ENCODE measurements at regions of chr15 and their contacts with region 1.

Region 1: GRCh38 chr15:31265871-31266711 is 60.5 kb upstream of the KLF13 start:
- DNase-seq: peak; percentile 58 to 90 (median 76)
- ATAC-seq: peak; percentile 86
- H3K4me3 ChIP-seq: no peak overlapping the region
- H3K4me3 Mint-ChIP-seq: peak overlapping the region; percentile 71
- H3K27ac ChIP-seq: peak overlapping the region; percentile 79 to 85
- H3K27ac Mint-ChIP-seq: peak overlapping the region; percentile 98
- H3K4me1 ChIP-seq: peaks cover 97% of the 10 kb centered on the region
- H3K4me1 Mint-ChIP-seq: peaks cover 98% of the 10 kb centered on the region
- H3K27me3 ChIP-seq: no peaks in the 10 kb centered on the region
- H3K27me3 Mint-ChIP-seq: no peaks in the 10 kb centered on the region
- CTCF ChIP-seq: no peak

Region 2: GRCh38 chr15:31215490-31216214 is 50.4 kb before region 1 on chr15:
- CTCF ChIA-PET with region 1: interaction called, 18 read pairs
- POLR2A ChIA-PET with region 1: interaction called, 21 read pairs
- intact Hi-C with region 1: loop called (anchors 1 to 2 kb)
- DNase-seq: peak; percentile 60 to 86 (median 78)
- ATAC-seq: peak; percentile 69
- H3K4me3 ChIP-seq: peak overlapping the region; percentile 35
- H3K4me3 Mint-ChIP-seq: peak overlapping the region; percentile 70
- H3K27ac ChIP-seq: peak overlapping the region; percentile 55 to 70
- H3K27ac Mint-ChIP-seq: peak overlapping the region; percentile 94
- H3K4me1 ChIP-seq: peaks cover 32% of the 10 kb centered on the region
- H3K4me1 Mint-ChIP-seq: peaks cover 57% of the 10 kb centered on the region
- H3K27me3 ChIP-seq: no peaks in the 10 kb centered on the region
- H3K27me3 Mint-ChIP-seq: no peaks in the 10 kb centered on the region
- CTCF ChIP-seq: peak; percentile 83

Region 3: DNA sequence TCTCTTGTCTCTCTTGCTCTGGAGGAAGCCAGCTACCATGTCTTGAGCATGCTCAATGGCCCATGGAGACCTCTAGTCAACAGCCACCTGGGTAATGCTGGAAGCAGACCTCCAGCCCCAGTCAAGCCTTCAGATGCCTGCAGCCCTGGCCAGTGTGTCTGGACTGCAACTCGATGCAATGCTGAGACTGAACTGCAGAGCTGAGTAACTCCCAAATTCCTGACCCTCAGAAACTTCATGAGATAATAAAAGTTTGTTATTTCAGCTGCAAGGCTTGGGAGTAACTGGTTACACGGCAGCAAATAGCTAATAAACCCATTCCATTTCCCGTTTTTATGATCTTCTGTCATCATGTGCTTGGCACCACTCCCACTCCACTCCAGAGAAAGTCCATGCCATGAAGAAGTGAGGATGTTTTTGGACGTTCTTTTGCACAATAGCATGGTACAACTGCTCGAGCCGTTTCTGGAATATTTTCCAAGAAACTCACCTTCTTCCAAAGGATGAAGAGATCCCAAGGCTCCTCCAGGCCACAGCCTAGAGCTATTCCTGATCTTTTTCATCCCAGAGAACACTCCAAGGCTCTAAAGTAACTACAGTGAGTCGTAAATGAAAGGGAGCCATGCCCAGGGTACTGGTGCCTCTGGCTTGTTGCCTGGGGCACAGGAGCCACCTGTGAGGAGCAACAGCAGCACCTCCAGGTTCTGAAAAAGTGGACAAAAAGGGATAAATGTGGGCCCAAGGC is 11.5 kb before region 1 on chr15:
- CTCF ChIA-PET with region 1: interaction called, 3 read pairs
- POLR2A ChIA-PET with region 1: interaction called, 15 read pairs
- intact Hi-C with region 1: no loop called
- DNase-seq: no peak
- ATAC-seq: no peak
- H3K4me3 ChIP-seq: no peak overlapping the region
- H3K4me3 Mint-ChIP-seq: no peak overlapping the region
- H3K27ac ChIP-seq: no peak overlapping the region
- H3K27ac Mint-ChIP-seq: no peak overlapping the region
- H3K4me1 ChIP-seq: peaks cover 28% of the 10 kb centered on the region
- H3K4me1 Mint-ChIP-seq: peaks cover 32% of the 10 kb centered on the region
- H3K27me3 ChIP-seq: peaks cover 0 to 4% of the 10 kb centered on the region in 2 experiments
- H3K27me3 Mint-ChIP-seq: no peaks in the 10 kb centered on the region
- CTCF ChIP-seq: no peak

Region 4: DNA sequence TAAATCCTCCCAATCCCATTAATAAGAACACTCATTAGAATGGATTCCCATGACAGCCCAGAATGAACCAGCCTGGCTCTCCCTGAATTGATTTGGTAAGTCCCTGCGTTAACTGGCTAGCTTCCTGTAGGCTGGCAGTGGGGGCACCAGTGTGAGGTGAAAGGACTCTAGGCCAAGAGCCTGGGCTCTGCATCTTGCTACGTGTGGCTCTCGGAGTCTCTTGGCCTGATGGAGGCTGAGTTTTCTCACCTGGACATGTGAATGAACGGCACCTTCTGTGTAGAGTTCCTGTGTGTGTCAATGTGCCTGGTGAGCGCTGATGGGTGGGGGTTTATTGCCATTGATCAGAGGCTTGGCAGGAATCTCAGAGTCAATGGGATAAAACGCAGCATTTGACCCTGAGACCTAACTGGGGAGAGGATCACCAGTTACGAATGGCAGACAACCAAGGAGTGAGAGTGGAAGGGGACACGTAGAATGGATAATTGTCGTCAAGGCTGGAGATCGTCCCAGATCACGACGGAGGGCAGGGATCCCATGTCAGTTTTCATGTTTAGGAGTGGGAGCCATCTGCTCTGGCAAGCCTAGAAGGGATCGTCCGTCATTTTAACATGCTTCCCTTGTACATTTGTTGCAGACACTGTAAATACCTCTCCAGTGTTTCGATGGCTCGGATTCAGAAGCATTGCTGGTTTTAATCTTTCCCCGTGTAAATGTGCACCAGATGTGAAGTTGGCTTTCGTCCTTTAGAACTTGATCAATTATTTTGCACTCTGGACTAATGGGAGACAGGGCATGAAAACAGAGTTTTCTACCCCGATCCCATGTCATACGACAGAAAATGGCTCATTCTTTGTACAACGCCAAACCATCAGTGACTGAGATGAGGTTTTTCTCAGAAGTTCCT is 51.6 kb after region 1 on chr15:
- CTCF ChIA-PET with region 1: no interaction called
- POLR2A ChIA-PET with region 1: interaction called, 234 read pairs
- intact Hi-C with region 1: no loop called
- DNase-seq: no peak
- ATAC-seq: no peak
- H3K4me3 ChIP-seq: no peak overlapping the region
- H3K4me3 Mint-ChIP-seq: no peak overlapping the region
- H3K27ac ChIP-seq: no peak overlapping the region
- H3K27ac Mint-ChIP-seq: peak overlapping the region; percentile 70
- H3K4me1 ChIP-seq: peaks cover 22% of the 10 kb centered on the region
- H3K4me1 Mint-ChIP-seq: peaks cover 41% of the 10 kb centered on the region
- H3K27me3 ChIP-seq: no peaks in the 10 kb centered on the region
- H3K27me3 Mint-ChIP-seq: no peaks in the 10 kb centered on the region
- CTCF ChIP-seq: no peak

Region 5: DNA sequence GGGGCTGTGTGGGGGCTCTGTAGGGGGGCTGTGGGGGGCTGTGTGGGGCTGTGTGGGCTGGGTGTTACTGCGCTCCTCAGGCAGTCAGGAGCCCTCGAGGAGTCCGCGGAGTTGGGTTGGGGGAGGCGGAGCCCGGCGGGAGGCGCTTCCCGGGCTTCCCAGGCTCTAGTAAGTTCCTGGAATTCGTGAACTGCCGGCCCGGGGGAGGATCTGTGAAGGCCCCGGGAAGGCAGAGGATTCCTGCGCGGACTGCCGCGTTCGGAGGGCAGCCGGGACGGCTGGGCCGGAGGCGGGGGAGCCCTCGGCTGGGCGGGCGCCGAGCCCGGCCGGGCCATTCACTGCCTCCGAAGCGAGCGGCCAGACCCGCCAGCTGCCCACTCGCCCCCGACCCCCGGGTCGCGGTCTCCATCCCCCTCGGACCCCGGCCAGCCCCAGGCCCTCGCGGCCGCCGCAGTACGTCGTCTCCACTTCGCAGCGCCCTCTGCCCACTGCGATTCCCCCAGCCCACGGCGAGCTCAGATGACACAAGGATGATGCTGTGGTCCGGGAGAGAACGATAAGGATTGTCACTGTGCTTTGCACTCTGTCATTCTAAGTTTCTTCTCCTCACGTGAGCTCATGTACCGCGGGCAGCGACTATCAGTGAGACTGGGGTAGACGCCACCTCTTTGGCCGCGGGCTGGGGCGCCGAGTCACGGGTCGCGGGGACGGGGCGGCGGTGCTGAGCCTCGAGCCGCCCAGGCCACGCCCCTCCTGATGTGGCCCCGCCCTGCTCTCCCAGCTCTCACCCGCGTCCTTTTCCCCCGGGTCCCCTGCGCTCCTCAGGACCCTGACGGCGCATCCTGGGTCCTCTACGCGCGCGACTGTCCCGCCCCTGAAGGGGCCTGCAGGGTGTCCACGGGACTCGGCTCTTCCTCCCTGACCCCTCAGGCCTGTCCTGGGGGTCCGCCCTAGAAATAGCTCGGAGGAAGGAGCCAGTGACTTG is 125.9 kb after region 1 on chr15:
- CTCF ChIA-PET with region 1: no interaction called
- POLR2A ChIA-PET with region 1: interaction called, 12 read pairs
- intact Hi-C with region 1: no loop called
- DNase-seq: peak; percentile 65 to 93 (median 82)
- ATAC-seq: peak; percentile 87
- H3K4me3 ChIP-seq: peak overlapping the region; percentile 75
- H3K4me3 Mint-ChIP-seq: peak overlapping the region; percentile 95
- H3K27ac ChIP-seq: peak overlapping the region; percentile 8 to 37
- H3K27ac Mint-ChIP-seq: peak overlapping the region; percentile 86
- H3K4me1 ChIP-seq: peaks cover 51% of the 10 kb centered on the region
- H3K4me1 Mint-ChIP-seq: peaks cover 52% of the 10 kb centered on the region
- H3K27me3 ChIP-seq: no peaks in the 10 kb centered on the region
- H3K27me3 Mint-ChIP-seq: no peaks in the 10 kb centered on the region
- CTCF ChIP-seq: no peak

Region 6: DNA sequence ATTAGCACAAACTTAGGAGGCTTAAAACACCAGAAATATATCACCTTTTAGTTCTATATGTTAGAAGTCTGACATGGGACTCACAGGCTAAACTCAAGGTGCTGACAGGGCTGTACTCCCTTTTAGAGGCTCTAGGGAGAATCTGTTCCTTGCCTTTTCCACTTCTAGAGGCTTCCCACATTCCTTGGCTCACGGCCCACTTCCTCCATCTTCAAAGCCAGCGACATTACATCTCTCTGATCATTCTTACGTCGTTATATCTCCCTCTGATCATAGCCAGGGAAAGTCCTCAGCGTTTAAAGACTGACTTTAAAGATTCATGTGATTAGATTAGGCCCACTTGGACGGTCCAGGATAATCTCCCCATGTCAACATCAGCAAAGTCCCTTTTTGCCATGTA is 1618.1 kb after region 1 on chr15:
- CTCF ChIA-PET with region 1: no interaction called
- POLR2A ChIA-PET with region 1: no interaction called
- intact Hi-C with region 1: no loop called
- DNase-seq: no peak
- ATAC-seq: no peak
- H3K4me3 ChIP-seq: no peak overlapping the region
- H3K4me3 Mint-ChIP-seq: no peak overlapping the region
- H3K27ac ChIP-seq: no peak overlapping the region
- H3K27ac Mint-ChIP-seq: no peak overlapping the region
- H3K4me1 ChIP-seq: no peaks in the 10 kb centered on the region
- H3K4me1 Mint-ChIP-seq: no peaks in the 10 kb centered on the region
- H3K27me3 ChIP-seq: no peaks in the 10 kb centered on the region
- H3K27me3 Mint-ChIP-seq: no peaks in the 10 kb centered on the region
- CTCF ChIP-seq: no peak